ENCODE measurements at regions of chr15 and their contacts with region 1.

Region 1: GRCh38 chr15:98840053-98840452 is 167.5 kb downstream of the PGPEP1L start:
- DNase-seq: no peak
- H3K4me3 ChIP-seq: no peak overlapping the region
- H3K27me3 ChIP-seq: no peaks in the 10 kb centered on the region
- CTCF ChIP-seq: no peak

Region 2: DNA sequence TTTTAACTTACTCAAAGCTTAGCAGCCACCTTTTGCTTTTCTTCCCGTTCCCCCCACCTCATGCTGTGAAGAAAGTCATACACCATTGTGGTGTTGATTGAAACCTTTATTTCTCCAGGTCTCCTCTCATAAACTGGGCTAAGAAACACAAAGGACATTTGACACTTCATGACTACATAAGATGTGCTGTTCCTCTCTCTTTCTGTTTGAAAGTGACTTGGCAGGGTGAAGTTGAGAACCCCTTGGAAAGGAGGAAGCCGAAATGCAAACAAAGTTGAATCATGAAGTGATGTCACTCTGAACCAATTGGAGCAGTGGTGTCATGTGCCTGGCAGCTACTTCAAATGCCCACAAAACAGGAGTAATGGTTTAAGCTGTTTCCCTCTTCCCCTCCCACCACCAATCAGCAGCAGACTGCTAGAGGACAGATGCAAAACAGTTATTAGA is 17.0 kb before region 1 on chr15:
- CTCF ChIA-PET with region 1: no interaction called
- POLR2A ChIA-PET with region 1: no interaction called
- DNase-seq: peak; percentile 54
- H3K4me3 ChIP-seq: no peak overlapping the region
- H3K27me3 ChIP-seq: no peaks in the 10 kb centered on the region
- CTCF ChIP-seq: no peak

Region 3: GRCh38 chr15:98850961-98851573 is 11.0 kb after region 1 on chr15:
- CTCF ChIA-PET with region 1: interaction called, 12 read pairs
- POLR2A ChIA-PET with region 1: no interaction called
- DNase-seq: no peak
- H3K4me3 ChIP-seq: no peak overlapping the region; the same call in 1 of the 2 replicates
- H3K27me3 ChIP-seq: no peaks in the 10 kb centered on the region
- CTCF ChIP-seq: peak; percentile 86